ENCODE measurements at regions of chr14 and their contacts with region 1.

Region 1: GRCh38 chr14:89973234-89973823 is 17.6 kb downstream of the TDP1 start:
- DNase-seq: peak; percentile 72
- H3K4me3 Mint-ChIP-seq: no peak overlapping the region
- H3K27ac Mint-ChIP-seq: no peak overlapping the region
- H3K4me1 Mint-ChIP-seq: no peaks in the 10 kb centered on the region
- H3K27me3 Mint-ChIP-seq: no peaks in the 10 kb centered on the region
- CTCF ChIP-seq: peak; percentile 84

Region 2: DNA sequence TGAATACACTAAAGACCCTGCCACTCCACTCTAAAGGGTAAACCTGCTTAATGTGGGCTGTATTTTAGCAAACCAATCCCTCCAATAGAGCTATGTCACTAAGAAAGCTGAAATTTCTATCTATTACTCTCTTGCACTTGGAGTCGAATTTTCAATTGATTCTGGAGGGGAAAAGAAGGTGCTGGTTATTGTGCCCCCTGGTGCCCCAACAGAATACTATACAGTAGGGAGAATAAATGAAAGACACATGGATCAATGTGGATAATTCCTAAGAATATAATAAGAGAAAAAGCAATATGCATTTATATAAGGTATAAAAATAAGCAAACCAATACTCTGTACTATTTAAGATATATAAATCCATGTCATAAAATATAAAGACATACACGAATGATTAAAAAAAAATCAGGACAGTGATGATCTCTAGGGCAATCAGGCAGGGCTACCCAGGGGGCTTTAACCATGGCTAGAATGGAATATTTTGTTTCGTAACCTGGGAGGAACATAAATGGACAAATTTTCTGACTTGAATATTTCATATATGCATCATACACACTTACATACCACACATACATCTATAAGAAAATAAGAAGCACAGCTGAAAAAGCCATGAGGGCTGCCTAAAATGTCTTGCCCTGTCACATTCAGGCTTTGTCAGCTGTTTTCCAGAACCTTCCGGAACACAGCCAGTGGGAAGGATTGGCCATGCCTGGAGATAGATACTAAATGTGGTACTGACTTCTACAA is 73.2 kb before region 1 on chr14:
- CTCF ChIA-PET with region 1: no interaction called
- POLR2A ChIA-PET with region 1: no interaction called
- intact Hi-C with region 1: no loop called
- DNase-seq: peak; percentile 35
- H3K4me3 Mint-ChIP-seq: no peak overlapping the region
- H3K27ac Mint-ChIP-seq: no peak overlapping the region
- H3K4me1 Mint-ChIP-seq: no peaks in the 10 kb centered on the region
- H3K27me3 Mint-ChIP-seq: no peaks in the 10 kb centered on the region
- CTCF ChIP-seq: peak; percentile 43

Region 3: GRCh38 chr14:89954070-89955028 is 19.0 kb before region 1 on chr14 and contains the start of gene EFCAB11:
- CTCF ChIA-PET with region 1: interaction called, 26 read pairs
- POLR2A ChIA-PET with region 1: interaction called, 3 read pairs
- intact Hi-C with region 1: no loop called
- DNase-seq: peak; percentile 99
- H3K4me3 Mint-ChIP-seq: peak within 1 kb of the TSS; percentile 88
- H3K27ac Mint-ChIP-seq: peak within 1 kb of the TSS; percentile 65
- H3K4me1 Mint-ChIP-seq: peaks cover 19% of the 10 kb centered on the region
- H3K27me3 Mint-ChIP-seq: no peaks in the 10 kb centered on the region
- CTCF ChIP-seq: peak; percentile 30
- total RNA-seq, gene EFCAB11: 10.6 and 11.1 TPM in 2 replicates

Region 4: GRCh38 chr14:89983375-89983774 is 10.0 kb after region 1 on chr14:
- CTCF ChIA-PET with region 1: interaction called, 75 read pairs
- POLR2A ChIA-PET with region 1: no interaction called
- intact Hi-C with region 1: no loop called
- DNase-seq: no peak
- H3K4me3 Mint-ChIP-seq: no peak overlapping the region
- H3K27ac Mint-ChIP-seq: no peak overlapping the region
- H3K4me1 Mint-ChIP-seq: no peaks in the 10 kb centered on the region
- H3K27me3 Mint-ChIP-seq: no peaks in the 10 kb centered on the region
- CTCF ChIP-seq: no peak

Region 5: GRCh38 chr14:90003908-90004307 is 30.6 kb after region 1 on chr14:
- CTCF ChIA-PET with region 1: interaction called, 19 read pairs
- POLR2A ChIA-PET with region 1: no interaction called
- intact Hi-C with region 1: no loop called
- DNase-seq: no peak
- H3K4me3 Mint-ChIP-seq: no peak overlapping the region
- H3K27ac Mint-ChIP-seq: no peak overlapping the region
- H3K4me1 Mint-ChIP-seq: no peaks in the 10 kb centered on the region
- H3K27me3 Mint-ChIP-seq: no peaks in the 10 kb centered on the region
- CTCF ChIP-seq: no peak

Region 6: DNA sequence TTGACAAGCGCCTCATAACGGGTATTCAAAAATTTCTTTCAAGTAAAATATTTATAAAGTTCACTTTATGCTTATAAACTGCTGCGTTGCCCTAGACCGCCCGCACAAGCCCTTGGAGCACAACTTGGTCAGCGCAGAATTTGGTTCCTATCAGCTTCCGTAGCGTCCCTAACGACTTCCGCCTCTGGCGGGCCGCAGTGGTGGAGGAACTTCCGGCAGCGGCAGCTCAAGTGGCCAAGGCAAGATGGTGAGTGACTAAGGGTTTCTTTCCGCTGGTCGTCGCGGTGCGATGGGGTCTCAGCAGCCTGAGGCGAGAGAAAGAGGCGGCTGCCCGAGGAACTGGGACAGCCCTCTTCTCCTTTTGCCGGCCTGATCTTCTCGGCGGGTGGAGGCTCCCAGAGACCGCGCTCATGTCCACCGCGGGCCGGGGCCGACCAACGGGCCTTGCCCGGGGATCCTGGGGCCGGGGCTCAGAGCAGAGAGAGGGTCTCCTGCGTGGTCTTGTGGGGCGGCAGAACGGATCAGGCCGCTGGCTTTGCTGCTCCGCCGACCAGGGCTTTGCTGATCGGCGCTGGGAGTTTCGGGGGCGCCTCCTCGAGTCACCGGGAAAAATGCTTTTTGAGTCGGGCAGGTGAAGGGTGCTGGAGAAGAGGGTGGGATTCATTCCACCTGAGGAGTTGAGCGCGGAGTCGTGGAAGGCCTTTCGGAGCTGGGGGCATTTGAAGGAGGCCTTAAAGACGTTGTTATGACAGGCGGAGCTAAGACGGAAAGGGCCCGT is 283.2 kb after region 1 on chr14 and contains the start of gene PSMC1:
- CTCF ChIA-PET with region 1: interaction called, 11 read pairs
- POLR2A ChIA-PET with region 1: interaction called, 6 read pairs
- intact Hi-C with region 1: no loop called
- DNase-seq: peak; percentile 91
- H3K4me3 Mint-ChIP-seq: peak within 1 kb of the TSS; percentile 97
- H3K27ac Mint-ChIP-seq: peak within 1 kb of the TSS; percentile 100
- H3K4me1 Mint-ChIP-seq: peaks cover 16% of the 10 kb centered on the region
- H3K27me3 Mint-ChIP-seq: no peaks in the 10 kb centered on the region
- CTCF ChIP-seq: no peak
- total RNA-seq, gene PSMC1: 107 and 125 TPM in 2 replicates

Region 7: DNA sequence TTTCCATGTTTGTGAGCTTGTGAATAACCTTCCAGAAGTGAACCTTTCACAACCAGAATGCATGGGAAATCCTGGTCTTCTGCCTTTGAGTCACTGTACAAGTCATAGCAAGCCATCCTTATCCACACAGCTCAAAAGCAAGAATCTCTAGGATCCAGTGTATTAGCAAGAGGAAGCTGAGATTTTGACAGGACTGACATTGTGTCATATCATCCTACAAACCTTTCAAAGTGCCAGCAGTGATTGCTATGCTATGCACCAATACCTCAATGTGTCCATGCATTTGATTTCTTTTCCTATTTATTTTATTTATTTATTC is 371.9 kb after region 1 on chr14:
- CTCF ChIA-PET with region 1: no interaction called
- POLR2A ChIA-PET with region 1: no interaction called
- intact Hi-C with region 1: no loop called
- DNase-seq: peak; percentile 46
- H3K4me3 Mint-ChIP-seq: no peak overlapping the region
- H3K27ac Mint-ChIP-seq: no peak overlapping the region
- H3K4me1 Mint-ChIP-seq: no peaks in the 10 kb centered on the region
- H3K27me3 Mint-ChIP-seq: peaks cover 8% of the 10 kb centered on the region
- CTCF ChIP-seq: no peak